ENCODE measurements at regions of chr13 and their contacts with region 1.

Region 1: DNA sequence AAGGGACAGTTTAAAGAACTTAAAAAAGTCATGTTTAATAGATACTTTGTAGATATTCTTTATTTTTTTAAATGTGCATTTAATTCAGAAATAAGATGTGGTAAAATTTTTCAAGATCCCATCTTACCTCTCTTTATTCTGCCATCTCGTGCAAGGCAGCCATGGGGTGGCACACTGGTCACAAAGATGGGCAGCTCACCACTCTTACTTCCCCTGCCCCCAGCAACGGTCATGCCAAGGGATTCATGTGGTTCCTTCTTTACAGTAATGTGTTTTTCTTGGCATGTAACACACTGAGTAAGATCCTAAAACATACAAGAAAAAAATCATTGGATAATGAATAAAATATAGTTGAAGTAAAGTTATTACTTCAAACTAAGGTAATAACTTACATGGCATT is 64.2 kb downstream of the LNX2 start:
- DNase-seq: peak; percentile 93
- H3K4me3 ChIP-seq: no peak overlapping the region
- H3K27ac ChIP-seq: no peak overlapping the region
- H3K4me1 ChIP-seq: peaks cover 9% of the 10 kb centered on the region
- H3K27me3 ChIP-seq: no peaks in the 10 kb centered on the region
- CTCF ChIP-seq: peak; percentile 26 to 53
- POLR2A ChIP-seq: no peak

Region 2: GRCh38 chr13:27573265-27573664 is 17.2 kb after region 1 on chr13:
- CTCF ChIA-PET with region 1: interaction called, 13 read pairs
- POLR2A ChIA-PET with region 1: no interaction called
- dilution Hi-C with region 1: no loop called
- intact Hi-C with region 1: no loop called
- DNase-seq: peak; percentile 73
- H3K4me3 ChIP-seq: no peak overlapping the region
- H3K27ac ChIP-seq: peak overlapping the region; percentile 50
- H3K4me1 ChIP-seq: peaks cover 28% of the 10 kb centered on the region
- H3K27me3 ChIP-seq: no peaks in the 10 kb centered on the region
- CTCF ChIP-seq: no peak
- POLR2A ChIP-seq: no peak

Region 3: DNA sequence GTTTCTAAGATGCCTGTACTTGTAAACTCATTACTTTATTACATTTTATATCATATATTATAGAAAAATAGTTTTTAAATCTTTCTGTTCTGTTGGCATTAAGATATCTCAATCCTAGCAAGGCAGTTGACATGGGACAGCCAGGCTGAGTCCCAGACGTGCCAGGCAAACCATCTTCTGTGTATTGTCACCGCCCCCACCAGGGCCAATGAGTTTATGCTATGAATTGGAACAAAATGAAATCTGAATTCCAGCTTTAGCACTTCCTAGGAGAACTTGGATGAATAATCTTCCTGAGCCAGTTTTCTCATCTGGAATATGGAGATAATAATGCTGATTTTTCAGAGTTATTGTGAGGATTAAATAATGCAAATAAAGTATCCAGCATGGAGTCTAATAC is 156.3 kb after region 1 on chr13:
- CTCF ChIA-PET with region 1: interaction called, 9 read pairs
- POLR2A ChIA-PET with region 1: no interaction called
- dilution Hi-C with region 1: no loop called
- intact Hi-C with region 1: loop called (anchors 2 kb)
- DNase-seq: no peak
- H3K4me3 ChIP-seq: no peak overlapping the region
- H3K27ac ChIP-seq: no peak overlapping the region
- H3K4me1 ChIP-seq: no peaks in the 10 kb centered on the region
- H3K27me3 ChIP-seq: peaks cover 0 to 4% of the 10 kb centered on the region in 2 experiments
- CTCF ChIP-seq: no peak
- POLR2A ChIP-seq: no peak